ENCODE measurements at regions of chr2 and their contacts with region 1.

Region 1: DNA sequence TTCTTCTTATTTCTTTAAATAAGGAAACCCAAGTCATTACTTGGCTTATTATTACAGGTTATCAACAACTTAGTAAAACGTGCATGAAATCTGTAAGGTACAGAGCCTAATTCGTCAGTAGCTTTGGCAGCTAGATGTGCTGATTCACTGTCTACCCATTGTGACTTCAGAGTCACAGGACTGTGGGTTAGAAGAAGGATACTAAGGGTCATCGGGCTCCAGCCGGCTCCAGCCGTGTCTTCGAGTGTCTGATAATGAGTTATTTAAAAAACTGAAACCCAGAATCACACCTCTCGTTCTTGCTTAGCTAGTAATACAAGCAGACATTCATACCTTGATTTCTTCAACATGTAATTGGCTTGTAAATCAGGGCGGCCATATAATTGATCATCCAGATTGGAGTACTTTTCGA is 170.5 kb downstream of the FMNL2 start:
- DNase-seq: peak in 1 of 2 experiments; percentile 55
- H3K4me3 ChIP-seq: no peak overlapping the region
- H3K27ac ChIP-seq: peak overlapping the region; percentile 65
- H3K4me1 ChIP-seq: peaks cover 51% of the 10 kb centered on the region
- H3K27me3 ChIP-seq: no peaks in the 10 kb centered on the region
- CTCF ChIP-seq: no peak

Region 2: DNA sequence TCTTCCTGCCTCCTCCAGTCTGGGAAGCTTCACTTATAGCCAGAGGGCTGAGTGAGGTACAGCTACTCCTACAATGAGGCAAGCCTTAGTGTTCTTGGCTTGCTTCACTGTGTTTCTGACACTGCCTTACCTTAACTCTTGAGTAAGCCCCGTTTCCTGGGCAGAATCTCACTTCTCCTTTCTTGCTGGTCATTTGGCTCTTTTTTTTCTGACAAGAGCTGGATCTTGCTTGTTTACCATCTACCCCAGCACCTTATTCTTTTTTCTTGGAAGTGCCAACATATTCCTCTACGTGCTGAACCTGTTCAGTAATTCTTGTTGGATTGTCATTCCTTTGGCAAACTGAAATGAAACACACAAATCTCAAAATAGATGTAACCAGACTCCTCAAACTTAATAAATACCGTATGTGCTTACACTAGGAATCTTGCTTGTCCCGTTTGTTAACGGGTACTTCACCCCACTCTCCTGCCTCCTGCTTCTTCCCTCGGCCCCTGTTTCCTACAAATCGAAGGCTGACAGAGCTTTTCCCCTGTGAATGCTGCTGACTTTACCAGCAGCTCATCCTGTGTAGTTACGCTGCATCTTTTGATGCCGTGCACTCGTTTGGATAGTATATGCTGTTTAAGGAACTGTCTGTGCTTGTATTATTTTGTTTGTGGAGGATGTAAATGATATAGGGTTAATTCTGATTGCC is 38.4 kb before region 1 on chr2:
- CTCF ChIA-PET with region 1: no interaction called
- POLR2A ChIA-PET with region 1: interaction called, 7 read pairs
- intact Hi-C with region 1: loop called (anchors 5 kb)
- DNase-seq: peak in 1 of 2 experiments; percentile 17
- H3K4me3 ChIP-seq: no peak overlapping the region
- H3K27ac ChIP-seq: peak overlapping the region; percentile 47; the same call in 1 of the 2 replicates
- H3K4me1 ChIP-seq: peaks cover 73% of the 10 kb centered on the region
- H3K27me3 ChIP-seq: no peaks in the 10 kb centered on the region
- CTCF ChIP-seq: no peak

Region 3: GRCh38 chr2:152525277-152525838 is 19.9 kb after region 1 on chr2:
- CTCF ChIA-PET with region 1: no interaction called
- POLR2A ChIA-PET with region 1: interaction called, 13 read pairs
- intact Hi-C with region 1: no loop called
- DNase-seq: peak in 1 of 2 experiments; percentile 25
- H3K4me3 ChIP-seq: no peak overlapping the region
- H3K27ac ChIP-seq: no peak overlapping the region
- H3K4me1 ChIP-seq: peaks cover 10% of the 10 kb centered on the region; the same call in 1 of the 2 replicates
- H3K27me3 ChIP-seq: no peaks in the 10 kb centered on the region
- CTCF ChIP-seq: no peak

Region 4: DNA sequence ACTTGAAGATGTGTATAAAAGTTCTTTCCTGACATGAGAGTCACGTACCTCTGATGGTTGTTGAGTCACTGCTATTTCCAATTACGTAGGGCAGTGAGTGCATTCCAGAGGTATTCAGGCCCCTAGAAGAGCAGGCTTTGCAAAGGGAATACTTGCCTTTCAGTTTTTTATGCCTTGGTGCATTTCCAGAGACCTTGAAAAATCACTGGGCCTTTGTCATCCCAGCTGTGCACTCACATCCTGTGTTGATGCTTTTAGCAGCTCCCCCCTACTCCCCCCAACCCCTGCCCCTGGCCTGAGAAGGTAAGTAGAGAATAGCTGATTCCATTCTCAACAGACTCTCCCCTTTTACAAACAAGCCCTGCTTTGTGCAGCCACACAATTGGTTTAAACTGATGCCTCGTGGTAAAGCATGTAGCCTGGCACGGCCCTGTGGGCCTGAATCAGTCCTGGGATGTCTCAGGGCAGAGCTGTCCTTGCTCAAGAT is 37.5 kb after region 1 on chr2:
- CTCF ChIA-PET with region 1: interaction called, 14 read pairs
- POLR2A ChIA-PET with region 1: no interaction called
- intact Hi-C with region 1: no loop called
- DNase-seq: peak; percentile 35 to 90
- H3K4me3 ChIP-seq: peak overlapping the region; percentile 10; the same call in 1 of the 2 replicates
- H3K27ac ChIP-seq: peak overlapping the region; percentile 78
- H3K4me1 ChIP-seq: peaks cover 37% of the 10 kb centered on the region
- H3K27me3 ChIP-seq: no peaks in the 10 kb centered on the region
- CTCF ChIP-seq: no peak